ENCODE measurements at regions of chr5 and their contacts with region 1.

Region 1: DNA sequence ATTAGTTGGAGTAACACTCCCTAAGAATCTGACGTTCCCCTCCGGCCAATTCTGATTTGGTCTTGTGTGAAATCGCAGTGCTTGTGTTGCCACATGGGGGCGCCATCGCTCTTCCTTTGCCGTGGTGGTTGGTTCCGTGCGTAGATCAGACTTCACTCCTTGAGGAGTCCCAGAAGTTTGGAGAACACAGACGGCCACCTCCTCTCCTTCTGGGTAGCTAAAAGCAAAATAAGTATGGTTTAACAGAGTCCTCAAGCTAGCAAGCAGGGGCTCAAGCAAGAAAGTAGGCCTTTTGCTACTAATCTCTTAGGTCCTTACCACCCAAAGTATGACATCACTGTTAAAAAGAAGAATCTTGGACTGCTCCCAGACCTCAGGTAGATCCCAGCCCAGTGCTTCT is 59.5 kb downstream of the HSPA4 start:
- DNase-seq: peak; percentile 91
- ATAC-seq: peak; percentile 64
- H3K4me3 Mint-ChIP-seq: no peak overlapping the region
- H3K27ac Mint-ChIP-seq: no peak overlapping the region
- H3K4me1 Mint-ChIP-seq: peaks cover 29% of the 10 kb centered on the region
- H3K27me3 Mint-ChIP-seq: no peaks in the 10 kb centered on the region

Region 2: GRCh38 chr5:133219296-133219695 is 108.0 kb after region 1 on chr5:
- CTCF ChIA-PET with region 1: interaction called, 3 read pairs
- POLR2A ChIA-PET with region 1: no interaction called
- intact Hi-C with region 1: loop called in 1 of 2 experiments (anchors 5 kb)
- DNase-seq: no peak
- ATAC-seq: no peak
- H3K4me3 Mint-ChIP-seq: no peak overlapping the region
- H3K27ac Mint-ChIP-seq: no peak overlapping the region
- H3K4me1 Mint-ChIP-seq: no peaks in the 10 kb centered on the region
- H3K27me3 Mint-ChIP-seq: no peaks in the 10 kb centered on the region

Region 3: DNA sequence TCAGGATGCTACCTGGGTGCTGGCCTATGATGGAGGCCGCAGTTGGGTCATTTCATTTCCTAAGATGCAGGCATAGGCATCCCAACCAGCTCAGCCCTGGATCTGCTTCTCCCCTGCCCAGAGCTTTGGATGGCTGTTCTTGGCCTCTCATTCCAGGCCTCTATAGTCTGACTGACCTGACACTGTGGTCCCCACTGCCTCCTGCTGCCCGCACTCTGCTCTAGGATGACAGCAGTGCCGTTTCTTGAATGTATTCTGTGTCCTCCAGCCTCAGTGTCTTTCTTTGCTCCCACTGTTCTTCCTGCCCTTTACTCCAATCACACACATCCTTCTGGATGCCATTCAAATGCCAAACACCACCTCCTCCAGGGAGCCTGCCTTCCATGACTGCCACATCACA is 176.2 kb after region 1 on chr5:
- CTCF ChIA-PET with region 1: interaction called, 4 read pairs
- POLR2A ChIA-PET with region 1: no interaction called
- intact Hi-C with region 1: loop called (anchors 1 kb)
- DNase-seq: peak; percentile 70
- ATAC-seq: peak; percentile 72
- H3K4me3 Mint-ChIP-seq: no peak overlapping the region
- H3K27ac Mint-ChIP-seq: no peak overlapping the region
- H3K4me1 Mint-ChIP-seq: no peaks in the 10 kb centered on the region
- H3K27me3 Mint-ChIP-seq: no peaks in the 10 kb centered on the region

Region 4: DNA sequence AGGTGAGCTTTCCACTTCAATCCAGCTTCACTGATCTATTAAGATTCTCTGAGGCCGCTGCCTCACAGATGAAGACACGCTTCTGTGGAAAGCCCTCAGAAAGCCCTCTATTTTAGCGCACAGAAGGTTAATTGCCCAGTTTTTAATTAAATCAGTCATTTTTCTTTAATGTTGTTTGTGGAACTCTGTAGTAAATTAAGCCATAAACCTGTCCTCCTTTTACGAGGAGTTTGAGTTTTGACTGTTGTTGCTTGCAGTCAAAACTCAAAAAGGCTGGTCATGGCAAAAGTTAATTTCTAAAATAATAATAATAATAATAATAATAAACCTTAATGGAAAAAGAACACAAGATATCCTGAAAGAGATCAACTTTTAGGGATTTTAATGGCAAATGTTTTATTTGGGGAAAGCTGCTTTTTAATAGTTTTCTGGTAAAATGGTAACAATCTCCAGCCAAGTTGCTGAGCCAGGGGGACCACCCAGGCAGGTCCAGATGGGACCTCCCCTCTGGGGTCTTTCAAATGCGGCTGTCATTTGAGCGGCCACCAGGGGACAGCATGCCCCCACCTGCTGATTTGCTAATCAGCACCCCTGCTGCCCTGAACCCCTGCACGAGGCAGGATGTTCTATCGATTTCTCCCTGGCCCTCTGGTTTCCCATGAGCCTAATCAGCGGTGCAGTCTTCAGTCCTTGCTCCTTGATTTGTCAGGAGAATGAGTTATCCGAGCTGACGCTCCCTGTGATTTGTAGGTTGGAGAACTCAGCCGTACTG is 253.8 kb after region 1 on chr5:
- CTCF ChIA-PET with region 1: no interaction called
- POLR2A ChIA-PET with region 1: no interaction called
- intact Hi-C with region 1: loop called in 1 of 2 experiments (anchors 5 kb)
- DNase-seq: peak; percentile 36
- ATAC-seq: no peak
- H3K4me3 Mint-ChIP-seq: no peak overlapping the region
- H3K27ac Mint-ChIP-seq: no peak overlapping the region
- H3K4me1 Mint-ChIP-seq: no peaks in the 10 kb centered on the region
- H3K27me3 Mint-ChIP-seq: no peaks in the 10 kb centered on the region

Region 5: DNA sequence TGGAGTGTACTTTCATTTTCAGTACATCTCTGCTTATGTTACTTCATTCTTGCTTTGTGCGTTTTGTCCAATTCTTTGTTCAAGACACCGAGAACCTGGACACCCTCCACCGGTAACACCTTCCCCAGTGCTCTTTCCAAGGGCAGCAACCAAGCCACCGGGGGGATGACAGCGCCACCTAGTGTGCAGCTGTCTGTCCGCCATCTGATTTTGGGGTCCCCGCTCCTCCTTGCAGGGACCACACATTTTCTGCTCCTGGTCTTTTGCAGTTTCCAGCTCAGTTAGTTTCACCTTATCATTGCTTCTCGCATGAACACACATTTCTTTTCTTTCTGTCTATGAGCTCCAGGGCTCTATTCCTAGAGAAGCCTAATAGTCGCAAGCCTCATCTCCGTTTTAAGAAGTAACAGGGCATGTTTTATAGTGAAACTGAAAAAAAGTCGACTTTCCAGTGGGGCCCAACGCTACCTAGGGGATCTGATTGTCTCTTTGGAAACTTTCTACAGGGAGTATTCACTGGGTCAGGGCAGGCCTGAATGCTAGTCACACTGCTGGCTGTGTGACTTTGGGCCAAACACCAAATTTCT is 349.0 kb after region 1 on chr5:
- CTCF ChIA-PET with region 1: interaction called, 5 read pairs
- POLR2A ChIA-PET with region 1: no interaction called
- intact Hi-C with region 1: loop called (anchors 1 kb)
- DNase-seq: peak; percentile 74
- ATAC-seq: peak; percentile 49
- H3K4me3 Mint-ChIP-seq: no peak overlapping the region
- H3K27ac Mint-ChIP-seq: no peak overlapping the region
- H3K4me1 Mint-ChIP-seq: peaks cover 4% of the 10 kb centered on the region
- H3K27me3 Mint-ChIP-seq: no peaks in the 10 kb centered on the region

Measured in activated CD4-positive, alpha-beta T cell treated with anti-CD3 and anti-CD28 coated beads for 36 hours (primary cell).